Adrenal gland (tissue), 19 donors: ENCODE measurements at regions of chr3 and their contacts with region 1.

Region 1: GRCh38 chr3:156151824-156152428 is 31.5 kb downstream of the KCNAB1 start:
- DNase-seq: peak; percentile 47 to 92 (median 77)
- H3K4me3 ChIP-seq: no peak overlapping the region
- H3K27ac ChIP-seq: no peak overlapping the region
- H3K4me1 ChIP-seq: no peaks in the 10 kb centered on the region
- H3K27me3 ChIP-seq: no peaks in the 10 kb centered on the region
- CTCF ChIP-seq: peak; percentile 46 to 78 (median 70)
- POLR2A ChIP-seq: no peak

Region 2: DNA sequence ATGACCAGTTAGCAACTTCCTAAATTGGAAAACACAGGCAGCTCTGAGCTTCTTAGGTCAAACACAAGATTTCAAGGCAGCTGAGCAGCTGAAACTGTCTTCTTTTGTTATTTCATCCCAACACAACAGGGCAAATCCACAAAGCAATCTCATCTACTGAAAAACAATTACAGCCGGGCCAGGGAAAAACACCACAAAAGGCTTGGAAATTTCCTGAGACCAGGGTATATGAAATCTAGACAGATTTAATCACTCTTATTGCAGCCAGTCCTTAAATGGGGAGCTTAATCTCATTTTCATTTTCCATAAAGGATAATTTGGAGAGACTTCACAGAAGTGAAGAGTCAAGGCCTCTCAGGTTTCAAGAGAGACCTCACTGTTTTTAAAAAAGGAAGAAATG is 221.2 kb after region 1 on chr3:
- intact Hi-C with region 1: loop called in 1 of 2 experiments (anchors 5 kb)
- DNase-seq: no peak
- H3K4me3 ChIP-seq: no peak overlapping the region
- H3K27ac ChIP-seq: no peak overlapping the region
- H3K4me1 ChIP-seq: no peaks in the 10 kb centered on the region
- H3K27me3 ChIP-seq: no peaks in the 10 kb centered on the region
- CTCF ChIP-seq: no peak
- POLR2A ChIP-seq: no peak

Region 3: DNA sequence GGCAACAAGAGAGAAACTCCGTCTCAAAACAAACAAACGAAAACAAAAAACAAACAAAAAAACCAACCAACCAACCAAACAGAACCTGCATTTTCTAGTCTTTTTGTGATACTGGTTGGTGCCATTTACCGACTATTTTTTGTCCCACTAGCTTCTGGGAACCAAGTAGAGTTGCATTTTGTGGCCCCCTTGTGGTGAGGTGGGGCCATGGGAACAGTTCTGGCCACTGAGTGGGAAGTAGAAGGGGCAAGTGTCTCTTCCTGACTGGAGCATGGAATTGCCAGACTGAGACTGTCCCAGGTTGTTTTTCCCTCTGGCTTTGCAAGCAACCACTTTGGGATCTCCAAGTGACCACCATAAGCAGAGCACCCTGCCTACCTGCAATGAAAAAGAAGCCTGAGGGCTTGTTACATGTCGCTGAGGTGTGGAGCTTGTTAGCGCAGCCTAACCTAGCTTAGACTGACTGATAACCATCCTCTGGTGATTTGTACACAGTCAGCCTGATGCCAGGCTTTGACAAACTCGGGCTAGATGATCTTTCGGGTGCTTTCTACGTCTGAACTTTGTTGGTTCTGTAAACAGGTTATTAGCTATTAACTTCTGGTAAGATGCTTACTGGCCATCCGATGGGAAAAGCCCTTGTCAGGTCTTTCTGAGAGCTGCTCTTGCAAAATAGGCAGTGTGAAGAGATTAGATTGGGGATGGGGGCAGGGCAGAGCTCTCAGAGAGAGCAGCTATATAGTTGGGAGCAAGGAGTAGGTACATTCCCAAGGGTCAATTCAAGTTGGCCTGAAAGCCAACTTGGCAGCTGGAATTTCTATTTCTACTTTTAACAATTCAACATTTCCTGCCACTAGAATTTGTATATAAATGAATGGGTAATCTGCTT is 230.8 kb after region 1 on chr3:
- intact Hi-C with region 1: loop called in 1 of 2 experiments (anchors 10 kb)
- DNase-seq: peak in 6 of 7 donors; percentile 16 to 60 (median 32)
- H3K4me3 ChIP-seq: no peak overlapping the region
- H3K27ac ChIP-seq: no peak overlapping the region
- H3K4me1 ChIP-seq: no peaks in the 10 kb centered on the region
- H3K27me3 ChIP-seq: no peaks in the 10 kb centered on the region
- CTCF ChIP-seq: peak; percentile 34 to 63 (median 50)
- POLR2A ChIP-seq: no peak

Region 4: GRCh38 chr3:156456771-156457224 is 304.9 kb after region 1 on chr3:
- intact Hi-C with region 1: loop called in 1 of 2 experiments (anchors 5 kb)
- DNase-seq: no peak
- H3K4me3 ChIP-seq: no peak overlapping the region
- H3K27ac ChIP-seq: no peak overlapping the region
- H3K4me1 ChIP-seq: no peaks in the 10 kb centered on the region
- H3K27me3 ChIP-seq: no peaks in the 10 kb centered on the region
- CTCF ChIP-seq: no peak
- POLR2A ChIP-seq: no peak

Region 5: GRCh38 chr3:156509189-156510174 is 357.6 kb after region 1 on chr3:
- intact Hi-C with region 1: loop called (anchors 5 to 10 kb)
- DNase-seq: no peak
- H3K4me3 ChIP-seq: no peak overlapping the region
- H3K27ac ChIP-seq: no peak overlapping the region
- H3K4me1 ChIP-seq: no peaks in the 10 kb centered on the region
- H3K27me3 ChIP-seq: no peaks in the 10 kb centered on the region
- CTCF ChIP-seq: peak; percentile 51 to 77 (median 61)
- POLR2A ChIP-seq: no peak